GM13976 (cell line): ENCODE measurements at regions of chr5 and their contacts with region 1.

Region 1: GRCh38 chr5:44774279-44774880 is 34.4 kb upstream of the MRPS30 start:
- DNase-seq: peak; percentile 14
- CTCF ChIP-seq: peak; percentile 22

Region 2: DNA sequence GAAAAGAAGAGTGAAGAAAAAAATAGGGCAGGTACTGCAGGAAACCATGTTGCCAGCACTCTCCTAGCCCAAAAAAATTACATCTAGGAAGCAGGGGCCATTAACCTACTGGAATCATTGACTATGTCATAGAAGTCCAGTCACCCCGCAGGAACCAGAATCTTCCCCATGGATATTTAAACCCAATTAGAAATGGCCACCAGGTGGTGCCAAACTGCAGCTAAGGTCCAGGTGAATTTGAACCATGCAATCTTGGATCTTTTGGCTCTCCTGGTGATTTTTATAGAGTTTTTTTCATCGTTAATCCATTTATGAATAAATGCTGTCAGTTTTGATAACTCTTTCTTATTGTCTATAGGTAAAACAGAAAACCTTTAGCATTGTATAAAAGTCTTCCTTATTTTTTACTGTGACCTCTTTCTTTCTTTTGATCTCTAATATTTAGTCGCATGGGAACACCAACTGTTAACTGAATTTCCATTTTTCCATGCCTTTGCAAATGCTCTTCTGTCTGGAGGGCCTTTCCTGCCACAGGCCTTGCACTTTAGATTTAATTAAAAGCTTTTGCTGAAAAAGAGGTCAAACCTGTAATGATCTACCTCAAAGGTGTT is 237.6 kb before region 1 on chr5:
- in situ Hi-C with region 1: loop called (anchors 10 kb)
- DNase-seq: peak; percentile 32
- CTCF ChIP-seq: peak; percentile 48

Region 3: DNA sequence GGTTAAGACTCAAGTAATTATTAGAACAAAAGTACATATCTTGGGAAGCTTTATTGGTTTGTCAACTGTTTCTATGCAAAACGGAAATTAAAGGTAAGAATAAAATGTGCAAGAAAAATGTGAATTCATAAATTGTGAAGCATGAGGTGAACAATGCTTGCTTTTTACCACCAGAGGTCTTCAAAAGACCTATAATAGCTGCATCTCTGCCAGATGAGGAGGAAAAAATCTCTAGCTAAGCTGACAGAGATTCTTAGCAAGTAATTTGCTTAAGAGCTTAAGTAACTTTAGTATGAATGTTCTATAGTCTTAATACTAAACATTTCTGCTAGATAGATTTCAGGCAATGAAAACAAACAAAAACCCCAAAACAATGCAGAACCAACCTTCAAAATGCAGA is 88.4 kb after region 1 on chr5:
- in situ Hi-C with region 1: no loop called
- DNase-seq: peak; percentile 25
- CTCF ChIP-seq: peak; percentile 29